CD4-positive, alpha-beta T cell (primary cell): ENCODE measurements at regions of chr16 and their contacts with region 1.

Region 1: GRCh38 chr16:85027349-85027957 is at the start of gene KIAA0513:
- DNase-seq: peak; percentile 91 to 98 (median 96)
- ATAC-seq: peak; percentile 64
- H3K4me3 ChIP-seq: peak within 1 kb of the TSS; percentile 87
- H3K4me3 Mint-ChIP-seq: peak within 1 kb of the TSS; percentile 98
- H3K27ac ChIP-seq: peak within 1 kb of the TSS; percentile 46 to 77
- H3K27ac Mint-ChIP-seq: peak within 1 kb of the TSS; percentile 93
- H3K4me1 ChIP-seq: peaks cover 35% of the 10 kb centered on the region
- H3K4me1 Mint-ChIP-seq: peaks cover 40% of the 10 kb centered on the region
- H3K27me3 ChIP-seq: no peaks in the 10 kb centered on the region
- H3K27me3 Mint-ChIP-seq: no peaks in the 10 kb centered on the region
- CTCF ChIP-seq: no peak
- total RNA-seq, gene KIAA0513: 9.0 to 10.9 TPM

Region 2: GRCh38 chr16:84504420-84505248 is 522.8 kb before region 1 on chr16 and contains the start of gene MEAK7:
- CTCF ChIA-PET with region 1: no interaction called
- POLR2A ChIA-PET with region 1: no interaction called
- intact Hi-C with region 1: loop called in 1 of 2 experiments (anchors 10 kb)
- DNase-seq: peak; percentile 95 to 98 (median 98)
- ATAC-seq: peak; percentile 95
- H3K4me3 ChIP-seq: peak within 1 kb of the TSS; percentile 85
- H3K4me3 Mint-ChIP-seq: peak within 1 kb of the TSS; percentile 93
- H3K27ac ChIP-seq: peak within 1 kb of the TSS; percentile 34 to 46
- H3K27ac Mint-ChIP-seq: peak within 1 kb of the TSS; percentile 90
- H3K4me1 ChIP-seq: peaks cover 64% of the 10 kb centered on the region
- H3K4me1 Mint-ChIP-seq: peaks cover 62% of the 10 kb centered on the region
- H3K27me3 ChIP-seq: no peaks in the 10 kb centered on the region
- H3K27me3 Mint-ChIP-seq: no peaks in the 10 kb centered on the region
- CTCF ChIP-seq: no peak
- total RNA-seq, gene MEAK7: 1.9 to 3.7 TPM

Region 3: DNA sequence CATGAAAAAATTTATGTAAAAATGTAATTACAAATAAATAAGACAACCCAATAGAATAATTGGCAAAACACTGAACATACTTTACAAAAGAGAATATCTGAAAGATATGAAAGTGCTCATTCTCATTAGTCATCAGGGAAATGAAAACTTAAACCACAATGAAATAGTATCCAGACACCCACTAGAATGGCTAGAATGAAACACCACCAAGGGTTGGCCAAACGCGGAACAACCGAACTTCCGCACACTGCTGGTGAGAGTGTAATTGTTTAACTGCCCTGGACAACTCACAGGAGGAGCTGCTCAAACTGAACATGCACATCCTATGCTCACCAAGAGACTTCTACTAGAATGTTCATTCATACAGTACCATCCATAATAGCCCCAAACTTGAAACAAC is 10.3 kb before region 1 on chr16:
- CTCF ChIA-PET with region 1: interaction called, 20 read pairs
- POLR2A ChIA-PET with region 1: interaction called, 23 read pairs
- intact Hi-C with region 1: no loop called
- DNase-seq: peak in 4 of 14 experiments; percentile 13 to 64 (median 33)
- ATAC-seq: no peak
- H3K4me3 ChIP-seq: no peak overlapping the region
- H3K4me3 Mint-ChIP-seq: no peak overlapping the region
- H3K27ac ChIP-seq: no peak overlapping the region
- H3K27ac Mint-ChIP-seq: no peak overlapping the region
- H3K4me1 ChIP-seq: peaks cover 11% of the 10 kb centered on the region
- H3K4me1 Mint-ChIP-seq: peaks cover 22% of the 10 kb centered on the region
- H3K27me3 ChIP-seq: no peaks in the 10 kb centered on the region
- H3K27me3 Mint-ChIP-seq: no peaks in the 10 kb centered on the region
- CTCF ChIP-seq: no peak

Region 4: GRCh38 chr16:85055503-85056210 is 28.2 kb after region 1 on chr16:
- CTCF ChIA-PET with region 1: interaction called, 8 read pairs
- POLR2A ChIA-PET with region 1: interaction called, 43 read pairs
- intact Hi-C with region 1: loop called (anchors 1 to 2 kb)
- DNase-seq: peak; percentile 33 to 94 (median 62)
- ATAC-seq: peak; percentile 92
- H3K4me3 ChIP-seq: peak overlapping the region; percentile 38
- H3K4me3 Mint-ChIP-seq: peak overlapping the region; percentile 79
- H3K27ac ChIP-seq: peak overlapping the region; percentile 68 to 78
- H3K27ac Mint-ChIP-seq: peak overlapping the region; percentile 92
- H3K4me1 ChIP-seq: peaks cover 40% of the 10 kb centered on the region
- H3K4me1 Mint-ChIP-seq: peaks cover 52% of the 10 kb centered on the region
- H3K27me3 ChIP-seq: no peaks in the 10 kb centered on the region
- H3K27me3 Mint-ChIP-seq: no peaks in the 10 kb centered on the region
- CTCF ChIP-seq: no peak

Region 5: GRCh38 chr16:85104821-85105391 is 77.5 kb after region 1 on chr16:
- CTCF ChIA-PET with region 1: no interaction called
- POLR2A ChIA-PET with region 1: interaction called, 11 read pairs
- intact Hi-C with region 1: no loop called
- DNase-seq: peak in 6 of 14 experiments; percentile 17 to 85 (median 44)
- ATAC-seq: peak; percentile 86
- H3K4me3 ChIP-seq: no peak overlapping the region
- H3K4me3 Mint-ChIP-seq: peak overlapping the region; percentile 52
- H3K27ac ChIP-seq: peak overlapping the region; percentile 7 to 47
- H3K27ac Mint-ChIP-seq: peak overlapping the region; percentile 94
- H3K4me1 ChIP-seq: peaks cover 44% of the 10 kb centered on the region
- H3K4me1 Mint-ChIP-seq: peaks cover 39% of the 10 kb centered on the region
- H3K27me3 ChIP-seq: no peaks in the 10 kb centered on the region
- H3K27me3 Mint-ChIP-seq: no peaks in the 10 kb centered on the region
- CTCF ChIP-seq: no peak